A549 (cell line): ENCODE measurements at regions of chr11 and their contacts with region 1.

Region 1: GRCh38 chr11:19742588-19743292 is 30.1 kb downstream of the NAV2 start:
- DNase-seq: peak; percentile 45 to 80
- ATAC-seq: peak; percentile 84 to 97
- H3K4me3 ChIP-seq: no peak overlapping the region
- H3K27ac ChIP-seq: 0 out of 6 replicates have a peak overlapping the region, but pooled peaks of 1 of the 2 experiments have one; percentile 15
- H3K4me1 ChIP-seq: 0 out of 3 replicates have a peak, but pooled peaks cover 8% of the 10 kb centered on the region
- CTCF ChIP-seq: peak; percentile 87
- EP300 ChIP-seq: no peak
- POLR2A ChIP-seq: no peak
- RAD21 ChIP-seq: peak; percentile 96

Region 2: DNA sequence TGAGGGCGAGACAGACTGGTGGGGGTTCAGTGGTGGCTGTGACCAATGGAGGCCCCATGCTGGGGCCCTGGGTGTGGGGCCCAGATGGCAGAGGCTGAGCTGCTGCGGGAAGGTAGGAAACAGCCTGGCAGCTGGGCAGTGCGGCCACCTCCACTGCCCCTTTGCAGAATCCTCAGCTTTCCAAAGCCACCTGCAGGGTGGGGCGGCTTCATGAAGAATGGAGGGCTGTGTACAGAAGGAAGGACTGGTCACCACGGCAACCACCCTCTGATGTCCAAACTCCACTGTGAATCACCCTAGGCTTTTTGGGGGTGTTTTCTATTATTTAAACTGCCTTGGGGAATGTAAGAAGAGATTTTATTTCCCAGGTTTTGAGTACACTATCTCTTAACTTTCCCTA is 196.4 kb before region 1 on chr11:
- CTCF ChIA-PET with region 1: interaction called, 59 read pairs
- POLR2A ChIA-PET with region 1: no interaction called
- DNase-seq: peak in 1 of 2 experiments; percentile 9
- ATAC-seq: peak in 1 of 2 experiments; percentile 50; a peak in 2 of 6 replicates
- H3K4me3 ChIP-seq: no peak overlapping the region
- H3K27ac ChIP-seq: no peak overlapping the region
- H3K4me1 ChIP-seq: 0 out of 3 replicates have a peak, but pooled peaks cover 3% of the 10 kb centered on the region
- CTCF ChIP-seq: no peak
- EP300 ChIP-seq: no peak
- POLR2A ChIP-seq: no peak
- RAD21 ChIP-seq: no peak

Region 3: GRCh38 chr11:19566583-19567379 is 176.0 kb before region 1 on chr11:
- CTCF ChIA-PET with region 1: interaction called, 296 read pairs
- POLR2A ChIA-PET with region 1: no interaction called
- DNase-seq: no peak
- ATAC-seq: no peak
- H3K4me3 ChIP-seq: no peak overlapping the region
- H3K27ac ChIP-seq: no peak overlapping the region
- H3K4me1 ChIP-seq: 0 out of 3 replicates have a peak, but pooled peaks cover 4% of the 10 kb centered on the region
- CTCF ChIP-seq: no peak
- EP300 ChIP-seq: no peak
- POLR2A ChIP-seq: no peak
- RAD21 ChIP-seq: no peak

Region 4: DNA sequence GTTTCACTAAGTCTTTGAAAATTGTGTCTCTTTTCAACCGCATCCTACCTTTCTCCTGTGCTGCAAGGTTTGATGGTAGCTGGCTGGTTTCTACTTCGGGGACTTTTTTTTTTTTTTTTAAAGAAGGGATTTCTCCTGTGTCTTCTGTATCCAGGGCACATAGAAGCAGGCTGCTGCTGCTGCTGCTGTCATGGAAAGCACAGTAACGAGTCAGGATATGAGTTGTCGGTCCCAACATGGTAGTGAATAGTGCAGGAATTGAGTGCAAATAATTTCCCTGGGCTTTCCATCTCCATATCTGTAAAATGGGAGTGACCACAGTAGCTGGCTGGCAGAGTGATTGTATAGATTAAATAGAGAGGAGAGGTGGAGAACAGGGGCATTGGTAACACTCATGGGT is 148.4 kb before region 1 on chr11:
- CTCF ChIA-PET with region 1: interaction called, 10 read pairs
- POLR2A ChIA-PET with region 1: no interaction called
- DNase-seq: no peak
- ATAC-seq: no peak
- H3K4me3 ChIP-seq: no peak overlapping the region
- H3K27ac ChIP-seq: no peak overlapping the region; a peak in 1 of 6 replicates
- H3K4me1 ChIP-seq: peaks cover 43% of the 10 kb centered on the region
- CTCF ChIP-seq: no peak
- EP300 ChIP-seq: no peak
- POLR2A ChIP-seq: no peak
- RAD21 ChIP-seq: no peak

Region 5: DNA sequence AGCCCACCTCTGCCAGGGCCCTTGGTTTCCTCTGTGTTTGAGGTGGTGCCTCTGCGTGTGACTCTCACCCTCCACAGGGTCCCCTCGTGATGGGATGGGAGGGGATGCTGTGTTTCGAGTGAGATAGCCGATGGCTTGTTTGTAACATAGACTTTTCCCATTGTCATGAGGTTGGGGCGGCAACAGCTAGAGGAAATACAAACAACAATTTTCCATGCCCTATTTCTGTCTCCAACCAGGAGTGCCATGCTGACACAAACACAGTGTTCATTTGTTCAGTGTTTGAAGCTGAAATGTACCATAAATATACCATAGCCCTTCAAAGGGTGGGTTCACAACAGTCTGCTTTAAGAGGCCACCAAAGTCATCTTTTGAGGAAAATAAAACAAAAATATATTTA is 49.6 kb before region 1 on chr11:
- CTCF ChIA-PET with region 1: no interaction called
- POLR2A ChIA-PET with region 1: no interaction called
- DNase-seq: no peak
- ATAC-seq: no peak
- H3K4me3 ChIP-seq: no peak overlapping the region
- H3K27ac ChIP-seq: no peak overlapping the region
- H3K4me1 ChIP-seq: peaks cover 2% of the 10 kb centered on the region; the same call in 1 of the 3 replicates
- CTCF ChIP-seq: no peak
- EP300 ChIP-seq: no peak
- POLR2A ChIP-seq: no peak
- RAD21 ChIP-seq: no peak

Region 6: DNA sequence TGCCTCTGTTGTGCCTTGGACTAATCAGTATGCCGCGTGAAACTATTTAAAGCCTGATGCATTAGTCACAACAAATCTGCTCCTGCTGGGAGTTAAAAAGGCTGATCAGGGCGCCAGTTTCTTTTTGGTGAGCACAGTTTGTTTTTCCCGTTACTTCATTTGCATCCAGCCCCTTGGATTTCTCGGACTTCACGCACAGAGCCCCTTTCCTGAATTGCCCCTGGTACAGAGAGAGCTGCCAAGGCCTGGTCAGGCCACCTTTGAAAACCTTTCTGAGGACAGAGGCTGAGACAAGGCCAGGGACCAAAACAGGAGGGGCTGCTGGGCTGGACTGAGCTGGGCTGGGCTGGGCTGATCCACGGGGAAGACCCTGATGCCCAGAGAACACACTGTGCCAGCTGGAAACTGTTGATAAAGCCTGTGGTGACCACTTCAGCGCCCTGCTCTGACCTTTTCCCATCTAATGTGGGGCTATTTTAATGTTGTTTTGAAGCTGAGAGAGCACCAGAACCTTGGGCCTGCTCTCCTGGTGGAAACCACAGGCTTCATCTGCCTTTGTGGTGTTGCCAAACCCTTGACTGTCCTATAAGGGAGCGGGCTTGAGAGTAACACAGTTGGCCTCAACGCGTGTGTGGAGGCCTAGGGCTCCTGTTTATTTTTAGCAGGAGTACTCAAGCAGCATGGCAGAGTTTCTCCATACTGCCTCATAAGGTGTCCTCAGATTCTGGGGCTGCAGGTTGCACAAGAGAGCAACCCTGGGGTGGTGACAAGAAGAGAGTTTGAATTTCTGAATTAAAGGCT is 14.1 kb after region 1 on chr11:
- CTCF ChIA-PET with region 1: interaction called, 25 read pairs
- POLR2A ChIA-PET with region 1: no interaction called
- DNase-seq: no peak
- ATAC-seq: no peak
- H3K4me3 ChIP-seq: no peak overlapping the region
- H3K27ac ChIP-seq: no peak overlapping the region
- H3K4me1 ChIP-seq: no peaks in the 10 kb centered on the region
- CTCF ChIP-seq: no peak
- EP300 ChIP-seq: no peak
- POLR2A ChIP-seq: no peak
- RAD21 ChIP-seq: no peak